ENCODE measurements at regions of chr1 and their contacts with region 1.

Region 1: GRCh38 chr1:42173155-42173933 is 8.8 kb upstream of the GUCA2A start:
- DNase-seq: peak; percentile 52
- H3K4me3 ChIP-seq: no peak overlapping the region
- H3K27ac ChIP-seq: no peak overlapping the region
- H3K4me1 ChIP-seq: peaks cover 17% of the 10 kb centered on the region
- H3K27me3 ChIP-seq: no peaks in the 10 kb centered on the region
- CTCF ChIP-seq: peak; percentile 97 to 98
- POLR2A ChIP-seq: no peak

Region 2: GRCh38 chr1:41573785-41574713 is 599.3 kb before region 1 on chr1:
- CTCF ChIA-PET with region 1: interaction called, 53 read pairs
- POLR2A ChIA-PET with region 1: no interaction called
- dilution Hi-C with region 1: no loop called
- intact Hi-C with region 1: loop called (anchors 1 kb)
- DNase-seq: peak; percentile 65
- H3K4me3 ChIP-seq: no peak overlapping the region
- H3K27ac ChIP-seq: no peak overlapping the region
- H3K4me1 ChIP-seq: no peaks in the 10 kb centered on the region
- H3K27me3 ChIP-seq: no peaks in the 10 kb centered on the region
- CTCF ChIP-seq: peak; percentile 80 to 90
- POLR2A ChIP-seq: no peak

Region 3: GRCh38 chr1:41842993-41843755 is 330.2 kb before region 1 on chr1:
- CTCF ChIA-PET with region 1: interaction called, 10 read pairs
- POLR2A ChIA-PET with region 1: no interaction called
- dilution Hi-C with region 1: no loop called
- intact Hi-C with region 1: no loop called
- DNase-seq: peak; percentile 52
- H3K4me3 ChIP-seq: no peak overlapping the region
- H3K27ac ChIP-seq: no peak overlapping the region
- H3K4me1 ChIP-seq: peaks cover 43% of the 10 kb centered on the region
- H3K27me3 ChIP-seq: no peaks in the 10 kb centered on the region
- CTCF ChIP-seq: no peak
- POLR2A ChIP-seq: no peak

Region 4: DNA sequence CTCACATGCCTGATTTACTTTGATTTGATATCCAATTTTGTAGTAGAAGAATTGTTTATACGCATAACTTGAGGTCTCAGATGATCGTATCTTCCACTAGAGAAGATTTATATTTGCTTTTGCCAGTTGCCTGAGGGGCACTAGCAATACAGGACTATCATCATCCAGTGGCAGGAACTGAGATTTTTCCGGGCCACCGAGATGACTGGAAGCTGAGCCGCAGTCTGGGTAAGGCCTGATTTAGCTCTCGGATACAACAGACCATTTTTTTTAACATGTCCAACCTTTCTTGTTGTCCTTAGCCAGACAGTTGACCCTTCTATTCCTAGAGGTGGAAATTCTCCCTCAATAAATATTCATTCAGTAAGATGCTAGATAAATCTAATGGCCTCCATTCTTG is 45.6 kb before region 1 on chr1:
- CTCF ChIA-PET with region 1: no interaction called
- POLR2A ChIA-PET with region 1: no interaction called
- dilution Hi-C with region 1: no loop called
- intact Hi-C with region 1: no loop called
- DNase-seq: no peak
- H3K4me3 ChIP-seq: no peak overlapping the region
- H3K27ac ChIP-seq: no peak overlapping the region
- H3K4me1 ChIP-seq: no peaks in the 10 kb centered on the region
- H3K27me3 ChIP-seq: peaks cover 6 to 14% of the 10 kb centered on the region in 2 experiments
- CTCF ChIP-seq: no peak
- POLR2A ChIP-seq: no peak

Region 5: DNA sequence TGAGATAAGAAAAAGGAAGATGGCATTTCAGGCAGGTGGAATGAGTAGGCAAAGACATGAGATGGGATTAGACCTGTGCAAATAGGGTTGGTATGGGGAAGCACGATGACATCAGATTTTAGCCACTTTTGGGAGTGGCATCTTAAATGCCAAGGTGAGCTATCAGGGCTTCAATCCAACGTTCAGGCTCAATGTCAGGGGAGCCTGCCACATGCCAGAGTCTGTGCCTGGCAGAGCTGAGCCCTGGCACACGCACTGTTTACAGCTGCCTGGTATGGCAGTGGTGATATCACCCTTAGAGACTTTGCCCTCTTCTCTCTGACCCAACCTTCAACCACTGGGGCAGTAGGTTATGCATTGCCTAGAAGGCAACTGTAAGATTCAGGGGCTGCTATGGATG is 21.2 kb before region 1 on chr1:
- CTCF ChIA-PET with region 1: interaction called, 58 read pairs
- POLR2A ChIA-PET with region 1: no interaction called
- dilution Hi-C with region 1: no loop called
- intact Hi-C with region 1: loop called (anchors 1 kb)
- DNase-seq: no peak
- H3K4me3 ChIP-seq: no peak overlapping the region
- H3K27ac ChIP-seq: no peak overlapping the region
- H3K4me1 ChIP-seq: no peaks in the 10 kb centered on the region
- H3K27me3 ChIP-seq: peaks cover 5 to 9% of the 10 kb centered on the region in 2 experiments
- CTCF ChIP-seq: no peak
- POLR2A ChIP-seq: no peak

Region 6: GRCh38 chr1:42186152-42186551 is 12.8 kb after region 1 on chr1:
- CTCF ChIA-PET with region 1: interaction called, 38 read pairs
- POLR2A ChIA-PET with region 1: no interaction called
- dilution Hi-C with region 1: no loop called
- intact Hi-C with region 1: no loop called
- DNase-seq: peak; percentile 77
- H3K4me3 ChIP-seq: no peak overlapping the region
- H3K27ac ChIP-seq: peak overlapping the region; percentile 52
- H3K4me1 ChIP-seq: peaks cover 29% of the 10 kb centered on the region
- H3K27me3 ChIP-seq: no peaks in the 10 kb centered on the region
- CTCF ChIP-seq: no peak
- POLR2A ChIP-seq: no peak

Region 7: GRCh38 chr1:42335050-42335808 is 161.9 kb after region 1 on chr1 and contains the start of gene FOXJ3:
- CTCF ChIA-PET with region 1: interaction called, 19 read pairs
- POLR2A ChIA-PET with region 1: no interaction called
- dilution Hi-C with region 1: no loop called
- intact Hi-C with region 1: loop called (anchors 1 kb)
- DNase-seq: peak; percentile 91
- H3K4me3 ChIP-seq: peak within 1 kb of the TSS; percentile 79 to 88 (median 82)
- H3K27ac ChIP-seq: peak within 1 kb of the TSS; percentile 68
- H3K4me1 ChIP-seq: peaks cover 16% of the 10 kb centered on the region
- H3K27me3 ChIP-seq: no peaks in the 10 kb centered on the region
- CTCF ChIP-seq: no peak
- POLR2A ChIP-seq: peak; percentile 95
- total RNA-seq, gene FOXJ3: 36.5 and 38.8 TPM in 2 replicates

Region 8: DNA sequence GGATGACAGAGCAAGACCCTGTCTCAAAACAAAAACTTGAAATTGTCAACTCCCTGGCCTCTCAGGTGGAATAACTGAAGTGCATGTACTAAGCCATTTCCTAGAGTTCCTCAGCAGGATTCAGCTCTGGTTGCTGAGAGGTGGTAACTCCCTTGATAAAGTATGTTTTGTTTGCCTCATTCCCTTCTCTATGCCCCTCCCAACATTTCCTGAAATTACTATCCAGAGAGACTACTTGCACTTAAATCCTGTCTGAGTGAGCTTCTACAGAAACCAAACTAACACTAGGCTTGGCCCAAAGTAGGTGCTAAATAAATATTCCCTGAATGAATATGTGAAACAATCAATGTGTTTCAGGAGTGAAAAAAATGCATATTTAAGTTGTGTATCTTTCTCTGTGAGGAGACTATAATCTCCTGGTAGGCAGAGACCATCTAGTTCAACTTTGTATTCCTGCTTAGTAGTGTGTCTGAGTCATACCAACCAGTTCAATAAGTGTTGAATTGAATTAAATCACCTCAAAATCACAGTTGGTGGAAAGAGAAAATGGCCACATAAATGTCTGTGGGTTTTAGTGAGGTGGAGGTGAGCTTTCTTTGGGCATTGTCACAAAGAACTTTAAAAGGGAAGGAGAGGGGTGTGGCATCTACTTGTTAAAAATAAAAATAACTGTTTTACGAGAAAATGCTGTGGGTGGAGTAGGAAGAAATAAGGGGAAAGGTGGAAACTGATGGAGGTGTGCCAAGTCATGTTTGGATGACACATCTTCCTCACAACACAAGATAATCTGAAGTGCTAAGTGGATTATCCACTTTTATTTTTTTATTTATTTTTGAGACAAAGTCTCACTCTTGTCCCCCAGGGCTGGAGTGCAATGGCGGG is 219.9 kb after region 1 on chr1:
- CTCF ChIA-PET with region 1: no interaction called
- POLR2A ChIA-PET with region 1: no interaction called
- dilution Hi-C with region 1: no loop called
- intact Hi-C with region 1: no loop called
- DNase-seq: no peak
- H3K4me3 ChIP-seq: no peak overlapping the region
- H3K27ac ChIP-seq: no peak overlapping the region
- H3K4me1 ChIP-seq: no peaks in the 10 kb centered on the region
- H3K27me3 ChIP-seq: peaks cover 6 to 8% of the 10 kb centered on the region in 2 experiments
- CTCF ChIP-seq: no peak
- POLR2A ChIP-seq: no peak

Region 9: DNA sequence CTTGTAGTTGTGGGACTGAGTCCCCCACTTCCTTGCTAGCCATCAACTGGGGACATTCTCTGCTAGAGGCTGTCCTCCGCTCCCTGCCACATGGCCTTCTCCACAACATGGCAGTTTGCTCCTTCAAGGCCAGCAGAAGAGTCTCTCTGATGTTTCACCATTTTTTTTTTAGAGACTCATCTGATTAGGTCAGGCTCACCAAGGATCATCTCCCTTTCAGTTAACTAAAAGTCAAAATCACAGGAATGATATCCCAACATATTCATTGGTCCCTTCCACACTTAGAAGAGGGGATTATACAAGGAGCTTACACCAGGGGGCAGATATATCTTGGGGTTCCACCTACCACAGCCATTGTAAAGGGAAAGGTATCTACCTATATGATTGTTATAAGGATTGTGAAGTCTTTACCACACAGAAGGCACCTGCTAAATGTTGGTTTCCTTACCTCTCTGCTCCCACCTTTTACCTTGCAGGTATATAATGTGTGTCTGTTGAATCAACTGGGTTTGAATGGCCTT is 230.6 kb after region 1 on chr1:
- CTCF ChIA-PET with region 1: no interaction called
- POLR2A ChIA-PET with region 1: no interaction called
- dilution Hi-C with region 1: no loop called
- intact Hi-C with region 1: no loop called
- DNase-seq: no peak
- H3K4me3 ChIP-seq: no peak overlapping the region
- H3K27ac ChIP-seq: no peak overlapping the region
- H3K4me1 ChIP-seq: no peaks in the 10 kb centered on the region
- H3K27me3 ChIP-seq: peaks cover 4 to 12% of the 10 kb centered on the region in 2 experiments
- CTCF ChIP-seq: peak in 1 of 2 donors; percentile 16
- POLR2A ChIP-seq: no peak

Region 10: DNA sequence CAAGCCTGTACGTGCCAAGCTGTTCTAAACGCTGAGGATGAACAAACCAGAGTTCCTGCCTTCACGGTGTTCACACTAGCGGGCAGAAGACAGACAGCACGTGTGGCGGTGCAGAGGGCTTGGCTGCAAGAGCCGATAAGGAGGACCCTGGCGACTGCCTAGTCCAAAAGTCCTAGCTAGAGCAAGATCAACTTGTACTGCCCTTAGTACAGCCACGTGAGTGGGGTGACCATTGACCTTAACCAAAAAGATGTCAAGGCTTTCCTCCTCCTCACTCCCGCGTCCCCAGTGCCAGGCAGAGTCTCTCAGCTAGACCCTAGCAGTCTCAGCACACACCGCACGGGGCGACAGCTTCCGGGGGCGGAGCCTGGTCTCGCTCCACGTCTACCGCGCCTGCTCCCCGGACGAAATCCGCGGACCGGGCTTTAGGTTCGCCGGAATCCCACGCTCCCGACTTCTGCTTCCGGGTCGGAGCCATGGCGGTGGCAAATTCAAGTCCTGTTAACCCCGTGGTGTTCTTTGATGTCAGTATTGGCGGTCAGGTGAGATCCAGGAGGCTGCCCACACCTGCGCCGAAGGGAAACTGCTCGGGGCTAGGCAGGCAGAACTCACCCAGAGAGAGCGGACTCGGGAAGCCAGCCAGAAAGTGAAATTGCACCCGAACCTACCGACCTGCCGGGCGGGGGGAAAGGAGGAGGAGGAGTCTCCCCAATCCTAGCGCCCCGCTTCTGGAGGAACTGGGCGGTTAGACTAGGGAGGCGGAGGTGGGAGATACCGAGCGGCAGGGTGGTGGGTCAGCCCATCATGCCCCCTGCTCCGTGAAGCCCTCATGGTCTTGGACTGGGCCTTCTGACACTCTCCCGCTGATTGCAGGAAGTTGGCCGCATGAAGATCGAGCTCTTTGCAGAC is 484.9 kb after region 1 on chr1 and contains the start of gene PPIH:
- CTCF ChIA-PET with region 1: interaction called, 3 read pairs
- POLR2A ChIA-PET with region 1: no interaction called
- dilution Hi-C with region 1: no loop called
- intact Hi-C with region 1: loop called (anchors 10 kb)
- DNase-seq: peak; percentile 93
- H3K4me3 ChIP-seq: peak within 1 kb of the TSS; percentile 55 to 86 (median 72)
- H3K27ac ChIP-seq: peak within 1 kb of the TSS; percentile 14
- H3K4me1 ChIP-seq: peaks cover 14% of the 10 kb centered on the region
- H3K27me3 ChIP-seq: peaks cover 7 to 8% of the 10 kb centered on the region in 2 experiments
- CTCF ChIP-seq: no peak
- POLR2A ChIP-seq: peak; percentile 94
- total RNA-seq, gene PPIH: 49.3 and 52.1 TPM in 2 replicates